Posterior cingulate gyrus (tissue), 11 donors: ENCODE measurements at regions of chr17 and their contacts with region 1.

Region 1: GRCh38 chr17:40068917-40069750 is 6.4 kb downstream of the THRA start:
- DNase-seq: peak; percentile 88 to 99 (median 92)

Region 2: DNA sequence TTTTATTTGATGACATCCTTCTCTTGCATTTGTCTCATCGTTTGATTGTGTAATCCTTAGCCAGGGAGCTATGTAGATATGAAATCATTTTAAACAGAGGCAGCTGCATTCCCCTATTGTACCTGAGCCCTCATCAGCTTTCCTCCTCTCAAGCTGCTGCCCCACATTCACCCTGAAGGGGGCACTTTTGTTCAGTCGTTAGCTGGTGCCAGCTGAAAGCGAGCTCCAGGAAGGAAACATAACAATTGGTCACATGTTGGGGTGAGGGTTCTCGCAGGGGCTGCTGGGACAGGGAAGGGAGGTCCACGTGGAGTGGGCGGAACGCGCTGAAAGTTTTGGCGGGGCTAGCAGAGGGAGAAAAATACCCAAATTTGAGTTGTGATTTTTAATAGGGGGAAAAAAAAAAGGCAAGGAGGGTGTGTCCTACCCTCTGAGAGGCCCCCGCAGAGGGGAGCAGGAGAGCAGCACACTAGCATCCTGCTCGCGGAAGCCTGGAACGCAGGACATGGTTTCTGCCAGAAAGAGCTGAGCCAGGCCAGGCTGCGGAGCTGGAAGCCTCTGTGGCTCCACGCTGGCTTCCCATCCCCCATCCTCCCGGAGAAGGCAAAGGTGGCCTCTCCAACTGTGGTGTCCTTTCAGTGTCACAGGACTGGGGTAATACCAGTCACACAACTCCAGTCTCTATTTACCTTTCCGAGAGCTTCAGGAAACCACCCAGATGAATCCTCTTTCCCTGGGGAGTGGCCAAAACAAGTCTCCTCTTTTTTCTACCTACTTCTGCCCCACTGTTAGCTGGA is 44.2 kb after region 1 on chr17:
- intact Hi-C with region 1: loop called (anchors 2 kb)
- DNase-seq: peak; percentile 91 to 99 (median 95)